SK-N-SH (cell line): ENCODE measurements at regions of chr1 and their contacts with region 1.

Region 1: GRCh38 chr1:14113841-14114567 is 414.0 kb downstream of the PRDM2 start:
- DNase-seq: peak; percentile 51
- H3K4me3 ChIP-seq: peak overlapping the region in 1 of 2 experiments; percentile 47; a peak in 1 of 4 replicates
- H3K27ac ChIP-seq: no peak overlapping the region
- H3K4me1 ChIP-seq: no peaks in the 10 kb centered on the region; a peak in 1 of 4 replicates
- H3K27me3 ChIP-seq: no peaks in the 10 kb centered on the region
- CTCF ChIP-seq: no peak
- EP300 ChIP-seq: no peak
- RAD21 ChIP-seq: peak; percentile 78

Region 2: DNA sequence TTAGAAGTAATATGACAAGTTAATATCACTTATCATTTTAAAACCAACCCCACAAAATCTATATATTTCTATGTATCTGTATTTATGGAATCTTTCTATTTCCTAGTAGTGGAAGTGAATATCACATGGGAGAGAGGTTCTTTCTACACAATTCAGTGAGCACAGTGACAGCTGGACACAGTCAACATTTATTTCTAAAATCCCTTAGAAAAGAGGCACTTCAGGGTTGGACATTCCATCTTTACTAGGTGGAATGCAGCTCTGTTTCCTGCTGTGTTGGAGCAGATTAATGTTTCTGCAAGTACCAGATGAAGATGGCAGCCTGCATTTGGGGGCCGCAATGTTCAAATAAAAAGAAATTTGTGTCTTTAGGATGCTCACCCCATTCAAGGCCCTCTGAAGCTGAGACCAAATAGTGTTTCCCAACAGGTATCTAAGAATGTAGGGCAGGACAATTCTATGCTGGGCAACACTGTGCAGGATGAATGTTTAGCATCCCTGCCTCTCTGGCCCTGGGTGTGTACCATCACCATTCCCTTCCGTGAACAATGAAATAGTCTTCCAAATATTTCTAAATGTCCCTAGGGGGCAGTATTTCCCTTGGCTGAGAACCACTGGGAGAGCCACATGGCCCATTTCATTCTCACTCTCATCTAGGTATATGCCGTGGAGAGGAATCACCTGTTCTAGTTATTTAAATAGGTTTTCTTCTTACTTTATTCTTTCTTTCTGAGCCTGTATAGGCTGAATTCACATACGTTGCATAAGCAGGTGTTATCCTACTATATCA is 19.2 kb before region 1 on chr1:
- CTCF ChIA-PET with region 1: interaction called, 13 read pairs
- POLR2A ChIA-PET with region 1: no interaction called
- DNase-seq: peak; percentile 26
- H3K4me3 ChIP-seq: no peak overlapping the region
- H3K27ac ChIP-seq: no peak overlapping the region
- H3K4me1 ChIP-seq: no peaks in the 10 kb centered on the region
- H3K27me3 ChIP-seq: no peaks in the 10 kb centered on the region
- CTCF ChIP-seq: no peak
- EP300 ChIP-seq: no peak
- RAD21 ChIP-seq: peak; percentile 63

Region 3: DNA sequence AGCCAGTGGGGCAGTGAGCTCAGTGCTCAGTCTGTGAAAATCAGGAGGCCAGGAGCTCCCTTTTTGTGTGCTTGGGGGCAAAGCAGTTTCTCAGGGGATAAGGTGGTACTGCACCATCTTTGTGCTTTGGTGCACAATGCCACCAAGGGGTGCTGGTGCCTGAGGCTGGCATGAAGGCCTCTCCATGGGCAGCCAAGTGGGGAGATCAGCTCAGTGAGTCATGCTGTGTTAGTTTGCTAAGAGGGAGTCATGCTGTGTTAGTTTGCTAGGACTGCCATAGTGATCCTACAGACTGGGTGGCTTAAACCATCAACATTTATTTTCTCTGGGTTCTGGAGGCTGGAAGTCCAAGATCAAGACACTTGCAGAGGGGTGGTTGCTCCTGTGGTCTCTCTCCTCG is 14.1 kb after region 1 on chr1:
- CTCF ChIA-PET with region 1: no interaction called
- POLR2A ChIA-PET with region 1: no interaction called
- DNase-seq: no peak
- H3K4me3 ChIP-seq: no peak overlapping the region
- H3K27ac ChIP-seq: no peak overlapping the region
- H3K4me1 ChIP-seq: no peaks in the 10 kb centered on the region
- H3K27me3 ChIP-seq: no peaks in the 10 kb centered on the region
- CTCF ChIP-seq: no peak
- EP300 ChIP-seq: no peak
- RAD21 ChIP-seq: no peak

Region 4: DNA sequence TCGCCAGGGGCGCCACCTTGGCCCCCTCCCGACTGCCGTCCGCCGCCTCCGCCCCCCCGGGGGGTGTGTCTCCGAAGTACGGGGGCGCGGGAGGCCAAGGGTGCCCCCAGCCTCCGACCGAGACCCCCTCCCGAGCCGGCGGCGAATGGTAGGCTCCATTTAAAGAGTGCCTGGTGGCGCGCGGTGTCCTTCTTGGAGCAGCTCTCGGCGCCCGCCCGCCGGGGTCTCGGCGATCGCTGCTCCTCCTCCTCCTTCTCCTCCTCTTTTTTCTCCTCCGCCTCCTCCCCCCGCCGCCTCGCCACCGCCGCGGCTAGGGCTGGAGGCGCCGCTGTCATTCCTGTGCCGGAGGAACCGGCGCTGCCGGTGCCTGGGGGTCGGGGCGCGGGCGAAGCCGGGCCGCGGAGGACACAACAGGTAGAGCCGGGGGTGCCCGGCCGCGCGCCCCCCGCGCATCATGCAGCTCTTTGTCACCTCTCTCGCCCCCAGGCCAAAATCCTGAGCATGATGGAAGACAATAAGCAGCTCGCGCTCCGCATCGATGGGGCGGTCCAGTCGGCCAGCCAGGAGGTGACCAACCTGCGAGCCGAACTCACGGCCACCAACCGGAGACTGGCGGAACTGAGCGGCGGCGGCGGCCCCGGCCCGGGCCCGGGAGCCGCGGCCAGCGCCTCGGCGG is 484.6 kb after region 1 on chr1 and contains the start of gene KAZN:
- CTCF ChIA-PET with region 1: interaction called, 12 read pairs
- POLR2A ChIA-PET with region 1: no interaction called
- DNase-seq: peak; percentile 72
- H3K4me3 ChIP-seq: peak within 1 kb of the TSS in 1 of 2 experiments; percentile 40; a peak in 2 of 4 replicates
- H3K27ac ChIP-seq: no peak within 1 kb of the TSS
- H3K4me1 ChIP-seq: peaks cover 0 to 4% of the 10 kb centered on the region in 2 experiments; a peak in 1 of 4 replicates
- H3K27me3 ChIP-seq: no peaks in the 10 kb centered on the region
- CTCF ChIP-seq: no peak
- EP300 ChIP-seq: no peak
- RAD21 ChIP-seq: no peak
- polyA plus RNA-seq, gene KAZN: 6.8 and 7.7 TPM in 2 replicates